ENCODE measurements at regions of chr7 and their contacts with region 1.

Region 1: DNA sequence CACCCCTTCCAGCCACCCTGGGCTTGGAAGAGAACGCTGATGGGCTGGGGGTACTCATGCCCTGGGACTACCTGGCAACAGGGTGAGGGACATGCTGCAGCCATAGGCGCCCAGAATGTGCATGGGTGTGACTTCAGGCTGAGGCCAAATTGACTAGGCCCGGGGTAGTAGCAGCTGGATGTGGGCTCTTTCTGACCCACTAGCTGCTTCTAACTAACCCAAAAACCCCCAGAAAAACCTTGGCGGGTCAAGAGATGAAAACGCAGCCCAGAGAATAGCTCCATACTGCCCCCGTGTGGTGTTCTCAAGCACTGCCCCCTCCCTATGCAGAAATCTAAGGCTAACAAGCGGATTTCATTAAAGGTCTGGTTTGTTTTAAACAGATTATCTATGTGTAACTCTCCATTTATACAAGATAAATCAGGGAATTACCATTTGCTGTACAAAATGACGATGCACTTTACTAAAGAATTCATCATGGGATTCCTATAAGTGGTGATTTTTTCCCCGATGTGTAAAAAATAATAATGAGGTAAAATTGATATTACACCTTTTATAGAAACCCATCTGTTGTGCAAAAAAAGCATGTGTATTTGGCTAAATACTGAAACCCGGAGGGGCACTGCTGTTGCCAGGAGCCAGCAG is 4.2 kb downstream of the SMARCD3 start:
- DNase-seq: peak; percentile 44
- ATAC-seq: no peak
- H3K4me3 ChIP-seq: no peak overlapping the region
- H3K27ac ChIP-seq: no peak overlapping the region
- H3K4me1 ChIP-seq: peaks cover 30% of the 10 kb centered on the region
- H3K27me3 ChIP-seq: no peaks in the 10 kb centered on the region
- CTCF ChIP-seq: peak; percentile 79
- POLR2A ChIP-seq: no peak
- RAD21 ChIP-seq: peak; percentile 64

Region 2: DNA sequence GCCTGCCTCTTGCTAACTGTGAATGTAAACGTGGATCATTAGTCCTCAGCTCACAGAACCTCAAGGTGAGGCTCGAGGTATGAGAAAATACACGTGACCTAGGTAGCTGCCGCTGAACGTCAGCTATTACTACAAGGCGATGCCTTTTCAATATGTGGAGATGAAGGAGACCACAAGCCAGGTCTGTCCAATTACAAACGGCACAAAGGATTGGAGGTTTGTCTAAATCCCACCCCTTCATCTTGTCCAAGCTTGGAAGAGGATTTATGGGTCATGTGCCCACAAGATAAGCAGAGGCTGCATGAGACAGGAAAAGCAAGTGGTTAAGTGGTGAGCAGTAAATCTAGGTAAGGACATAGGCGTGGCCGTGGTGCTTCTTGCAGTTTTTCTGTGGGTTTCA is 37.4 kb before region 1 on chr7:
- CTCF ChIA-PET with region 1: no interaction called
- POLR2A ChIA-PET with region 1: no interaction called
- dilution Hi-C with region 1: no loop called
- in situ Hi-C with region 1: no loop called
- intact Hi-C with region 1: no loop called
- DNase-seq: no peak
- ATAC-seq: no peak
- H3K4me3 ChIP-seq: no peak overlapping the region
- H3K27ac ChIP-seq: no peak overlapping the region
- H3K4me1 ChIP-seq: no peaks in the 10 kb centered on the region
- H3K27me3 ChIP-seq: peaks cover 59% of the 10 kb centered on the region
- CTCF ChIP-seq: no peak
- POLR2A ChIP-seq: no peak
- RAD21 ChIP-seq: no peak

Region 3: DNA sequence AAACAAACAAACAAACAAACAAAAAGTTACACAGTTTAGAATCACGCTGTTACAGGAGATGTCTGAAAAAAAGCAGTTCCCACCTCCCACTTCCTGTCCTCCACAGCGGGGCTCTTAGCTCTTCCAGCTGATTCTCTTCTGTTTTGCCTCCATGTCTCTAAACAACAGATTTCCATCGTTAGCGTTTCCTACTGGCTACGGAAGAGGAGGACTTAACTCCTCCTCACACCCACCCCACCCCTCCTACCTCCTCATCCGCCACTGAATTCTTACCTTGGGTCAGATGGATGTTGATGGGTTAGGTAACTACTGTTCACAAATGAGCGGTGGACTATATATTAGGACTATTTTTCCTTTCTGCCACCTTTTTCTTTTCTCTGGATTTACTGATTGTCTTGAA is 60.5 kb after region 1 on chr7:
- CTCF ChIA-PET with region 1: interaction called, 4 read pairs
- POLR2A ChIA-PET with region 1: no interaction called
- dilution Hi-C with region 1: no loop called
- in situ Hi-C with region 1: no loop called
- intact Hi-C with region 1: loop called (anchors 1 kb)
- DNase-seq: no peak
- ATAC-seq: no peak
- H3K4me3 ChIP-seq: no peak overlapping the region
- H3K27ac ChIP-seq: no peak overlapping the region
- H3K4me1 ChIP-seq: peaks cover 13% of the 10 kb centered on the region; the same call in 1 of the 2 replicates
- H3K27me3 ChIP-seq: peaks cover 31% of the 10 kb centered on the region
- CTCF ChIP-seq: no peak
- POLR2A ChIP-seq: no peak
- RAD21 ChIP-seq: no peak

Measured in IMR-90 (cell line).